Panc1 (cell line): ENCODE measurements at regions of chr5 and their contacts with region 1.

Region 1: GRCh38 chr5:135565725-135566421 is 12.9 kb downstream of the CXCL14 start:
- DNase-seq: peak; percentile 43
- ATAC-seq: peak; percentile 83
- H3K4me3 ChIP-seq: no peak overlapping the region
- H3K27ac ChIP-seq: no peak overlapping the region
- H3K4me1 ChIP-seq: no peaks in the 10 kb centered on the region
- H3K27me3 ChIP-seq: peaks cover 4% of the 10 kb centered on the region; the same call in 1 of the 2 replicates
- CTCF ChIP-seq: peak; percentile 94

Region 2: GRCh38 chr5:135466178-135467050 is 99.5 kb before region 1 on chr5:
- CTCF ChIA-PET with region 1: interaction called, 15 read pairs
- POLR2A ChIA-PET with region 1: interaction called, 3 read pairs
- in situ Hi-C with region 1: no loop called
- intact Hi-C with region 1: no loop called
- DNase-seq: no peak
- ATAC-seq: peak; percentile 94
- H3K4me3 ChIP-seq: no peak overlapping the region
- H3K27ac ChIP-seq: no peak overlapping the region
- H3K4me1 ChIP-seq: peaks cover 2% of the 10 kb centered on the region; the same call in 1 of the 2 replicates
- H3K27me3 ChIP-seq: peaks cover 18% of the 10 kb centered on the region
- CTCF ChIP-seq: peak; percentile 95